CD8-positive, alpha-beta T cell (primary cell): ENCODE measurements at regions of chr11 and their contacts with region 1.

Region 1: GRCh38 chr11:46700241-46701077 is at the starts of genes ARHGAP1 and ZNF408:
- DNase-seq: peak; percentile 98 to 100 (median 99)
- ATAC-seq: peak; percentile 97
- H3K4me3 ChIP-seq: peak within 1 kb of the TSS; percentile 79 to 92
- H3K4me3 Mint-ChIP-seq: peak within 1 kb of the TSS; percentile 99
- H3K27ac ChIP-seq: peak within 1 kb of the TSS; percentile 73 to 82
- H3K27ac Mint-ChIP-seq: peak within 1 kb of the TSS; percentile 96
- H3K4me1 ChIP-seq: peaks cover 57% of the 10 kb centered on the region
- H3K4me1 Mint-ChIP-seq: peaks cover 53% of the 10 kb centered on the region
- H3K27me3 ChIP-seq: no peaks in the 10 kb centered on the region
- H3K27me3 Mint-ChIP-seq: no peaks in the 10 kb centered on the region
- CTCF ChIP-seq: no peak
- total RNA-seq, gene ARHGAP1: 33.4 to 36.9 TPM
- total RNA-seq, gene ZNF408: 24.0 to 24.3 TPM

Region 2: GRCh38 chr11:45846974-45847910 is 853.2 kb before region 1 on chr11 and contains the start of gene CRY2:
- CTCF ChIA-PET with region 1: no interaction called
- POLR2A ChIA-PET with region 1: no interaction called
- intact Hi-C with region 1: loop called in 1 of 2 experiments (anchors 5 kb)
- DNase-seq: peak; percentile 98 to 99 (median 98)
- ATAC-seq: peak; percentile 86
- H3K4me3 ChIP-seq: peak within 1 kb of the TSS; percentile 81 to 96
- H3K4me3 Mint-ChIP-seq: peak within 1 kb of the TSS; percentile 82
- H3K27ac ChIP-seq: peak within 1 kb of the TSS; percentile 88 to 96
- H3K27ac Mint-ChIP-seq: peak within 1 kb of the TSS; percentile 95
- H3K4me1 ChIP-seq: peaks cover 36% of the 10 kb centered on the region
- H3K4me1 Mint-ChIP-seq: peaks cover 56% of the 10 kb centered on the region
- H3K27me3 ChIP-seq: no peaks in the 10 kb centered on the region
- H3K27me3 Mint-ChIP-seq: no peaks in the 10 kb centered on the region
- CTCF ChIP-seq: no peak
- total RNA-seq, gene CRY2: 172 to 177 TPM

Region 3: DNA sequence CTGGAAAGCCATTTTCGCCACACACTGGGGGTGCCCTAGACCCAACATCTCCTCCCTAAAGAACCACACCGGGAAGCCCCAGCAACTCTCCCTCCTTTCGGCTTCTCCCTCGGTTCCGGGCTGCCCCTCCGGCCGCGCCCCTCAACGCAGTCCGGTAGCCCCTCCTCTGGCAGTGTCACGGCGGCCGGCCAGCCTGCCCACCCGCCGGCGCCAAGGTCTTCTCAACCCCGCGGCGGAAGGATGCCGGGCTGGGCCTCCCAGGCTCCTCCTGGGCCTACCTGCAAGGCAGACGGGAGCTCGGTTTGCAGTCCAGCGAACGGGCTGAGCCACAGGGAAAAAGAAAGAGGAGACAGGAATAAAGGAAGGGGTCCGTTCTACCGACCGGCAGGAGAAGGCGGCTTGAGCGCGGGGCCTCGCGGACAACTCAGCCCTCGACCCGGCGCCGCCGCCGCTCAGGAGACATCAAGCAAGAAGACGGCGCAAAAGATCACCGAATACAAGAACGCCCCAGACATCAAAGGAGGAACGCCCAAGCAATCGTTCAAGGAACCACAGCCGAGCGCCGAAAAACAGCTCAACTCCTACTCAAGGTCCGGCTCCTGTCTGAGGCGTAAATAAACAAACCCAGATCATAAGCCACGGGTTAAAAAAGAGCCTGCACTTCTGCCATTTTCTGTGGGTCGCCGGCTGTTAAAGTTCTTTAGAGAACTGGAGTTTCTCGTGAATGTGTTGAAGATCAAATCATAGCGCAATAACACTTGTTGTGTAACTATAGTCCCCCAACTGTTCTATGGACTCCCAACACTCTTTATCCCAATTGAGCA is 106.7 kb before region 1 on chr11 and contains the start of gene AMBRA1:
- CTCF ChIA-PET with region 1: no interaction called
- POLR2A ChIA-PET with region 1: interaction called, 4 read pairs
- intact Hi-C with region 1: loop called (anchors 1 kb)
- DNase-seq: peak; percentile 70 to 91 (median 81)
- ATAC-seq: peak; percentile 90
- H3K4me3 ChIP-seq: peak within 1 kb of the TSS; percentile 67 to 80
- H3K4me3 Mint-ChIP-seq: peak within 1 kb of the TSS; percentile 98
- H3K27ac ChIP-seq: peak within 1 kb of the TSS; percentile 57 to 67
- H3K27ac Mint-ChIP-seq: peak within 1 kb of the TSS; percentile 96
- H3K4me1 ChIP-seq: peaks cover 32% of the 10 kb centered on the region
- H3K4me1 Mint-ChIP-seq: peaks cover 43% of the 10 kb centered on the region
- H3K27me3 ChIP-seq: no peaks in the 10 kb centered on the region
- H3K27me3 Mint-ChIP-seq: no peaks in the 10 kb centered on the region
- CTCF ChIP-seq: no peak
- total RNA-seq, gene AMBRA1: 31.2 to 34.1 TPM

Region 4: DNA sequence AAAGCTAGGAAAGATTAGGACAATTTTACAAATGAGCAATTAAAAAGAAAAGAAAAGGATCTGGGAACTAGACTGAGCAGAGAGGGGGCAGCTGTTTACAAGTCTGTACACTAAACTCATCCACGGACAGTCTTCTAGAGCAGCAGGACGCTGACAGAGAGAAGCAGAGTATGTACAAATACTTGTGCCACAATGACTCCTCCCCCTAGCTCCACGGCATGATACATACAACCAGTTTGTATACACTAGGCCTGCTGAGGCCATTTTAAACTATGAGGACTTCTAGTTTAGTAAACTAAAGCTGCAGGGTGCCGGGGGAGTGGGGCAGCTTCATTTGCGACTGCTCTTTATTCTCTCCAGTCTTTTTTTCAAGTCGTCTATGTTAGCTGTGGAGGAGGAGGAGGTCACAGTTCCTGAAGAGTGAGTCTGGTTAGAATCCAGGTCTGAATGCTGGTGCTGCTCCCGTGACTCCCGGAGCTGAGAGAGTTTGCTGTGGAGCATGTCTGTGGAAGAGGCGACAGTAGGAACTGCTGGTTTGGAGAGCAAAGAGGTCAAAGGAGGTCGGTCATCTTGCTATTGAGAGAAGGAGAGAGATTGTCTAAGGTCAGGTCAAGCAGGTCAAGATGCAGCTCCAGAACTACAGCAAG is 43.4 kb after region 1 on chr11:
- CTCF ChIA-PET with region 1: no interaction called
- POLR2A ChIA-PET with region 1: no interaction called
- intact Hi-C with region 1: no loop called
- DNase-seq: no peak
- ATAC-seq: no peak
- H3K4me3 ChIP-seq: no peak overlapping the region
- H3K4me3 Mint-ChIP-seq: no peak overlapping the region
- H3K27ac ChIP-seq: no peak overlapping the region
- H3K27ac Mint-ChIP-seq: no peak overlapping the region
- H3K4me1 ChIP-seq: no peaks in the 10 kb centered on the region
- H3K4me1 Mint-ChIP-seq: no peaks in the 10 kb centered on the region
- H3K27me3 ChIP-seq: no peaks in the 10 kb centered on the region
- H3K27me3 Mint-ChIP-seq: no peaks in the 10 kb centered on the region
- CTCF ChIP-seq: no peak

Region 5: DNA sequence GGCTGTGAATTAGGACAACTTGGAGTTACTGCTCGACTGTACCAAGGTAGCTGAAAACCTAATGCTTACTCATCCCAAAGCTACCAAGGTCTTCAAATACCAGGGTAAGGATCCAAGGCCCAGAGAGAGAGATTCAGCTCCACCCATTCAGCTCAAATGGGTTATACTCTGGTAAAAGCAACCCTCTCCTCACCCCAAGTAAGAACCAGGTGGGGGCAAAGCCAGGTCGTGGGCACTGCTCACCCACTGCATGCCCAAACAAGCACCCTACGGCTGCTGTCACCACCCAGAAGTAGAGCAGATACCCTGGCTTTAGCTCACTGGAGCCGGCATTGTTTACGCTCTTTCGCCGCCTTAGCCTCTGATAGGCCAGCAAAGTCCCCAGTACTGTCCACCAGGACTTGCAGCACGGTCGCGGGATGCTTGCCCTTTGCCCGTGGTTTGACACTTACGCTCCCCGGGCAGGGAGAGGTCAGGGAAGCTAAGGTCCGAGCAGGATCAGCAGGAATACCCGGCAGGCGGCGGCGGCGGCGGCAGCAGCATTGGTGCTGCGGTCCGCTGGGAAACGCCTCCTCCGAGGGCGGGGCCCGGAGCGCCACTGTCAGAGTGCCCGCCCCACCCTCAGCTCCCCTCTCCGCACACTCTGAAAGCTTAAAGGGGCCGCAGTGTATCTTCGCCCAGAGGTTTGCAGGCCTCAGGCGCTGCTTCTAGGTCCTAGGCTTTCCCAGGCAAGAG is 126.0 kb after region 1 on chr11:
- CTCF ChIA-PET with region 1: no interaction called
- POLR2A ChIA-PET with region 1: no interaction called
- intact Hi-C with region 1: loop called (anchors 1 to 5 kb)
- DNase-seq: peak; percentile 41 to 82 (median 75)
- ATAC-seq: peak; percentile 100
- H3K4me3 ChIP-seq: peak overlapping the region; percentile 57 to 60
- H3K4me3 Mint-ChIP-seq: peak overlapping the region; percentile 84
- H3K27ac ChIP-seq: no peak overlapping the region
- H3K27ac Mint-ChIP-seq: peak overlapping the region; percentile 32
- H3K4me1 ChIP-seq: peaks cover 16% of the 10 kb centered on the region
- H3K4me1 Mint-ChIP-seq: peaks cover 34% of the 10 kb centered on the region
- H3K27me3 ChIP-seq: no peaks in the 10 kb centered on the region
- H3K27me3 Mint-ChIP-seq: no peaks in the 10 kb centered on the region
- CTCF ChIP-seq: no peak

Region 6: DNA sequence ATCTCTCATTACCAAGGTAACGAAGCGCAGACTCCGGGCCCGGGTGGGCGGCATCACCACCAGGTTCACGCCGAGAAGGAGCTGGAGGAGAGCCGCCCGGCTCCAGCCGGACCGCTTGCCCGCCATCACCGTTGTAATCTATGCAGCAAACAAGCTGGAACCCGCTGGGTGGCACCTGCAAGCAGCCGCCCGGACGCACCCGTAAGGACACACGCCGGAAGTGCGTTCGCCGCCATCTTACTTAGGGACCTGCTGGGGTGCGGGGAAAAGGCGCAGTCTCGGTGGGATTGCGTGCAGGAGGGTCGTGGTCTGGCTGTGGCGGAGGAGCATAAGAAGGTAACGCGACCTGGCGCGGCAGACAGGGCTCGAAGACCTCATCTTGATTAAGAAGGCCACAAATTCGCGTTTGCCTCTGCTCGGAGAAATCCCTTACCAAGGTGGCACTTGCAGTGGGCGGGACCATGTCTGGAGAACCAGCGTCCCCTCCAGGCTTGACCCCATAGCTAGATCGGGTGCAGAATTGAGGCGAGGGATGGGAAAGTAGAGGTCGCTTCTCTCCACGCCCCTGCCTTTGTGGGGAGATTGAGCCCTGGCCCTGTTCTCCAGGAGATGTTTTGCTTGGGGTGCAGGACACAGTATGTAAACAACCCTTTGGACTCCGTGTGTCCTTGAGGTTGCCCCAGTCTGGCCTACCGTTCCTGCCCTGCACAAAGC is 548.4 kb after region 1 on chr11 and contains the start of gene ACP2:
- CTCF ChIA-PET with region 1: no interaction called
- POLR2A ChIA-PET with region 1: interaction called, 3 read pairs
- intact Hi-C with region 1: loop called (anchors 1 to 10 kb)
- DNase-seq: peak; percentile 70 to 93 (median 85)
- ATAC-seq: peak; percentile 97
- H3K4me3 ChIP-seq: peak within 1 kb of the TSS; percentile 81 to 90
- H3K4me3 Mint-ChIP-seq: peak within 1 kb of the TSS; percentile 100
- H3K27ac ChIP-seq: peak within 1 kb of the TSS; percentile 63 to 83
- H3K27ac Mint-ChIP-seq: peak within 1 kb of the TSS; percentile 100
- H3K4me1 ChIP-seq: peaks cover 17% of the 10 kb centered on the region
- H3K4me1 Mint-ChIP-seq: peaks cover 32% of the 10 kb centered on the region
- H3K27me3 ChIP-seq: no peaks in the 10 kb centered on the region
- H3K27me3 Mint-ChIP-seq: no peaks in the 10 kb centered on the region
- CTCF ChIP-seq: no peak
- total RNA-seq, gene ACP2: 18.3 to 22.6 TPM

Region 7: GRCh38 chr11:47642099-47642855 is 941.8 kb after region 1 on chr11 and contains the start of gene MTCH2:
- CTCF ChIA-PET with region 1: no interaction called
- POLR2A ChIA-PET with region 1: no interaction called
- intact Hi-C with region 1: loop called in 1 of 2 experiments (anchors 2 kb)
- DNase-seq: peak; percentile 91 to 98 (median 95)
- ATAC-seq: peak; percentile 95
- H3K4me3 ChIP-seq: peak within 1 kb of the TSS; percentile 42 to 91
- H3K4me3 Mint-ChIP-seq: peak within 1 kb of the TSS; percentile 96
- H3K27ac ChIP-seq: peak within 1 kb of the TSS; percentile 55 to 96
- H3K27ac Mint-ChIP-seq: peak within 1 kb of the TSS; percentile 97
- H3K4me1 ChIP-seq: peaks cover 18% of the 10 kb centered on the region
- H3K4me1 Mint-ChIP-seq: peaks cover 32% of the 10 kb centered on the region
- H3K27me3 ChIP-seq: no peaks in the 10 kb centered on the region
- H3K27me3 Mint-ChIP-seq: no peaks in the 10 kb centered on the region
- CTCF ChIP-seq: no peak
- total RNA-seq, gene MTCH2: 16.4 to 19.5 TPM